ENCODE measurements at regions of chr18 and their contacts with region 1.

Region 1: GRCh38 chr18:9082711-9083510 is 19.6 kb upstream of the NDUFV2 start:
- DNase-seq: peak in 10 of 35 experiments; percentile 3 to 59 (median 16)
- ATAC-seq: peak; percentile 74 to 86 (median 74)
- H3K4me3 ChIP-seq: peak overlapping the region in 1 of 2 donors; percentile 2
- H3K4me3 Mint-ChIP-seq: peak overlapping the region; percentile 34 to 64 (median 64)
- H3K27ac ChIP-seq: peak overlapping the region; percentile 88
- H3K27ac Mint-ChIP-seq: peak overlapping the region; percentile 94 to 98
- H3K4me1 ChIP-seq: peaks cover 14 to 25% of the 10 kb centered on the region in 2 experiments
- H3K4me1 Mint-ChIP-seq: peaks cover 25 to 52% (median 44%) of the 10 kb centered on the region in 3 donors
- H3K27me3 ChIP-seq: no peaks in the 10 kb centered on the region
- H3K27me3 Mint-ChIP-seq: no peaks in the 10 kb centered on the region

Region 2: DNA sequence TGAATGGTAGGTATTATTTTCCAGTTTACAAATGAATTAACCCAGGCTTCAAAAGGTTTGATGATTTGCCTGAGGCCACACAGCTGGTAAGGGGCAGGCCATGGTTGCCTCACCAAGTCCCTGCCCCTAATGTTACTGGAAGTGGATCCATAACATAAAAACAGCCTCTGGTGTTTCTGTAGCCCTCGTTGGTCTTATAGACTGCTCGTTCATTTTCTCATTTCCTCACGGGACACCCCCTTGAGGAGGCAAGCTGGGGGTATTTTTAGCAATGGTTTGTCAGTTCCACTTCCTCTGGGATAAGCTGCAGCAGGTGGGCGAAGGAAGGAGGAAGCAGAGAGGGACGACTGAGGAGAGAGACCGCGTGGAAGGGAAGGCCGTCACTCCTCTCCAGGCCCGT is 13.3 kb before region 1 on chr18:
- CTCF ChIA-PET with region 1: interaction called, 4 to 13 read pairs
- POLR2A ChIA-PET with region 1: interaction called in 1 of 2 experiments, 3 read pairs
- DNase-seq: no peak
- ATAC-seq: no peak
- H3K4me3 ChIP-seq: no peak overlapping the region
- H3K4me3 Mint-ChIP-seq: no peak overlapping the region
- H3K27ac ChIP-seq: no peak overlapping the region
- H3K27ac Mint-ChIP-seq: no peak overlapping the region
- H3K4me1 ChIP-seq: peaks cover 3 to 5% of the 10 kb centered on the region in 2 experiments
- H3K4me1 Mint-ChIP-seq: peaks cover 6 to 23% (median 8%) of the 10 kb centered on the region in 3 donors
- H3K27me3 ChIP-seq: no peaks in the 10 kb centered on the region
- H3K27me3 Mint-ChIP-seq: no peaks in the 10 kb centered on the region

Region 3: DNA sequence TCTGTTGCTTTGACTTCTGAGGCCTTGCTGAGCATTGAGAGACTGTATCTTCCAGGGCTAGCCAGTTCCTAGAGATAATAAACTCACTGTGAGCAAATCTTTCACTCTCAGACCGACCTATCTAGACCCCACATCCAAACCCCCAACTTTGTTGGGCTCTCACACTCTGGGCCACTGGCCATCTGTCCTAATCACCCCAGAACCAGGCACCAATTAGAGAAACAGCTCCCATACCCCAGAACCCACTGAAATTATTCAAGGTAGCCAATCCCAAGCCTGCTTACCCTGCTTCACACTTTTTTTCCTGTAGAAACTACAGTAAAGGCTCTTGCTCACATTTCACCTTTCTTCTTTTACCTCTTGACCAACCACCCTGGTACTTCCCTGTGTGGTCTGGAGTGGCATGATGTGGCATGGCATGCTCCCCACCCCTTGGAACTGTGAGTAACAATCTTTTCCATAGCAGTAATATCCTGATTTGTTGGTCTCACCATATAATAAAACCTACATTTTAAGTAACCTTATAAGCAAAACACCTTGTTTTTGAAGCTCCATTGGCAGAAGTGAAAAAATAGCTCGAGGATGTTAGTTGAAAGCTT is 108.8 kb after region 1 on chr18:
- CTCF ChIA-PET with region 1: no interaction called
- POLR2A ChIA-PET with region 1: no interaction called
- DNase-seq: no peak
- ATAC-seq: peak in 1 of 4 experiments; percentile 10
- H3K4me3 ChIP-seq: no peak overlapping the region
- H3K4me3 Mint-ChIP-seq: no peak overlapping the region
- H3K27ac ChIP-seq: no peak overlapping the region
- H3K27ac Mint-ChIP-seq: peak overlapping the region in 1 of 2 donors; percentile 23
- H3K4me1 ChIP-seq: no peaks in the 10 kb centered on the region
- H3K4me1 Mint-ChIP-seq: peaks cover 41 to 46% (median 41%) of the 10 kb centered on the region in 3 donors
- H3K27me3 ChIP-seq: no peaks in the 10 kb centered on the region
- H3K27me3 Mint-ChIP-seq: no peaks in the 10 kb centered on the region

Region 4: GRCh38 chr18:9240270-9240669 is 157.4 kb after region 1 on chr18:
- CTCF ChIA-PET with region 1: interaction called in 1 of 2 experiments, 13 read pairs
- POLR2A ChIA-PET with region 1: no interaction called
- DNase-seq: no peak
- ATAC-seq: no peak
- H3K4me3 ChIP-seq: no peak overlapping the region
- H3K4me3 Mint-ChIP-seq: no peak overlapping the region
- H3K27ac ChIP-seq: no peak overlapping the region
- H3K27ac Mint-ChIP-seq: peak overlapping the region in 1 of 2 donors; percentile 1
- H3K4me1 ChIP-seq: no peaks in the 10 kb centered on the region
- H3K4me1 Mint-ChIP-seq: peaks cover 2 to 22% (median 11%) of the 10 kb centered on the region in 3 donors
- H3K27me3 ChIP-seq: no peaks in the 10 kb centered on the region
- H3K27me3 Mint-ChIP-seq: no peaks in the 10 kb centered on the region